Activated CD4-positive, alpha-beta memory T cell treated with anti-CD3 and anti-CD28 coated beads for 36 hours (primary cell): ENCODE measurements at regions of chr10 and their contacts with region 1.

Region 1: DNA sequence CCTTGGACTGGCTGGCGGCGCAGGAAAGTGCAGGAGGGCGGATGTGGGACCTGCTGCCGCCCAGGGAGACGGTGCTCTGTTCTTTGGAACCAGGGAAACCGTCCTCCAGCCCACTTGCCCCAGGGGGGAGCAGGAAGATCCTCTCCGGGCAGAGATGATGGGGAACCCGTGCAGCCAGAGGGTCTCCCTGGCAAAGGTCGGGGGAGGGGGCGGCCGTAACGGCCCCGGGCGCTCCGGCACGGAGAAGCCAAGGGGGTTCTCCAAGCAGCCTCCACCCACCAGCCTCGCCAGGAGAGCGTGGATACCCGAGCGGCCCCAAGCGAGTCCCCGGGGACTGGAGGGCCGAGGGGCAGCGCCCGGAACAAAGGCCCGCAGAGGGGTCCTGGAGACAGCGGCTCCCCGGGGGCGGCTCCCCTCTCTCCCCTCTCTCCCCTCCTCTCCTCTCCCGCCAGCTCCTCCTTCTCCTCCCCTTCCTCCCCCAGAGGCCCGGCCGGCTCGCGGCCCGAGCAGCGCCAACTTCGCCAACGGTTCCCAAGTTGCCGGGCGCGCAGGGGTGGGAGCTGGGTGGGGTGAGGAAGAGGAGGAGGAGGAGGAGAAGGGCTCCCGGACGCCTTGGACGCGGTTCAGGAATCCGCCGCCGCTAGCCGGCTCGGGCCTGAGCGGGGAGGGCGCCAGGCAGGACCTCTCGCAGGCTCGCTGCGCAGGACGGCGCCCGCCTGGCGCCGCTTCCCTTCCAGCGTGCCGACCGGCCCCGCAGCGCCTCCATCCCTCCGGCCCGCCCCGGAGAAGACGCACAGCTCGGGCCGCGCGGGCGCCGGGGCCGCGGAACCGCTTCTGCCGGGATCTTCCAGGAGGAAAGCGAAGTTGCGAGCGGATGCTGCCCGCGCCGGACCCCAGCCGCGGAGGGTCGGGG is at the start of gene CHST3:
- DNase-seq: no peak
- H3K4me3 Mint-ChIP-seq: peak within 1 kb of the TSS; percentile 66
- H3K27ac Mint-ChIP-seq: no peak within 1 kb of the TSS
- H3K4me1 Mint-ChIP-seq: peaks cover 9% of the 10 kb centered on the region
- H3K27me3 Mint-ChIP-seq: peaks cover 54% of the 10 kb centered on the region
- total RNA-seq, gene CHST3: 0.19 to 0.31 TPM

Region 2: DNA sequence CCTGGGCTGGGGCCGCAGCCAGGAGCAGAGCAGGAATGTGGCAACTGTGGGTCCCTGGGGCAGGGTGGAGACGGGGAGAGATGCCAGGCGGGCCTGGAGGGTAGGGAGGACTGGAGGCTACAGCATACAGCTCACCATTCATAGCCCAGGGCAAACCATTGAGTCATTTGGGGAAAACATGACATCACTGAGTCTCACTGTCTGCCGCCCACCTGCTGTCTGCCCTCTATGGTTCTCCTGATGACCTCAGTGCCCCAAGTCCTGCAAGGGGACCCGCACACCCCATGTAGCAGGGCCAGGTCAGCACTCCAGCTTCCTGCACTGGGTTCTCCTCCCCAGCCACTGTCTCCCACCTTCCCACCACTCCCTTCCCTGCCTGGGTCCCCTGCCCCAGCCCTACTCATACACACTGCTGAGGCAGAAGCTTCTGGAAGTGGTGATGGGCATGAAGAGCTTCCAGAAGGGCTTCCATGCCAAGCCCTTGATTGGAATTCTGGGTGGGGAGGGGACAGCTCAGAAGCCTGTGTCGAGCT is 10.5 kb after region 1 on chr10:
- CTCF ChIA-PET with region 1: interaction called, 3 read pairs
- POLR2A ChIA-PET with region 1: no interaction called
- intact Hi-C with region 1: loop called (anchors 1 kb)
- DNase-seq: peak; percentile 81
- H3K4me3 Mint-ChIP-seq: no peak overlapping the region
- H3K27ac Mint-ChIP-seq: peak overlapping the region; percentile 38
- H3K4me1 Mint-ChIP-seq: peaks cover 23% of the 10 kb centered on the region
- H3K27me3 Mint-ChIP-seq: no peaks in the 10 kb centered on the region